Cardiac septum (tissue), 1 donor: ENCODE measurements at regions of chr12 and their contacts with region 1.

Region 1: GRCh38 chr12:46983393-46984266 is 95.8 kb upstream of the PCED1B start:
- DNase-seq: no peak

Region 2: DNA sequence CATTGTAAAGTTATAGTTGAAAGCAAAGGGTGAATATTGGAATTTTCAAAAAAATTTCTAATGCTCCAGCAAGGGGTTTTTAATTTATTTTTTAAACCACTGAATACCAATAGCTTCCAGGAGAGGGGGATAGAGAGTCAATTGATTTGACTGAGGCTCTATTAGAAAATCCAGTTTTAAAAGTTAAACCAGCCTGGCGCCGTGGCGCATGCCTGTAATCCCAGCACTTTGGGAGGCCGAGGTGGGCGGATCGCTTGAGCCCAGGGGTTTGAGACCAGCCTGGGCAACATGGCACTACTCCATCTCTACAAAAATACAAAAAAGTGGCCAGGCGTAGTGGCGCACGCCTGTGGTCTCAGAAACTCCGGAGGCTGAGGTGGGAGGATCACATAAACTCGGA is 307.9 kb before region 1 on chr12:
- intact Hi-C with region 1: loop called (anchors 5 kb)
- DNase-seq: no peak